Heart right ventricle (tissue), 16 donors: ENCODE measurements at regions of chr15 and their contacts with region 1.

Region 1: DNA sequence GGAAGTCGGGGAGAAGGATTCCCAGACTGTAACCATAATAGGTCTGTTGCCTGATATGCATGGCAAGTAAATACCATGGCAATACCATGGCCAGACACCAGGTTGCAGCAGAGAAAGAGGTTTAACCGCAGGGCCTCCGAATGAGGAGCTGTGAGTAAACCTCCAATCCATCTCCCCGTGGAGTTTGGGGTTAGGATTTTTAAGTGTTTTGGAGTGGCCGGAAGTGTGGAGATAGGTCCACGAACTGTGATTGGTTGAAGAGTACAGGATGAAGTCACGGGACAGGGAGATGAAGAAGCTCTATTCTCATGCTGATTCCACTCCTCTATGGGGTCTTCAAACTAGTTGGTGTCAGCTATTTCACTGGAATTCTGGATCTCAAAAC is 127.9 kb downstream of the ST8SIA2 start:
- DNase-seq: peak; percentile 31 to 86
- ATAC-seq: peak; percentile 87 to 97 (median 95)
- H3K4me3 ChIP-seq: no peak overlapping the region
- H3K27ac ChIP-seq: no peak overlapping the region
- H3K4me1 ChIP-seq: peaks cover 0 to 11% (median 3%) of the 10 kb centered on the region in 9 donors
- H3K27me3 ChIP-seq: no peaks in the 10 kb centered on the region
- CTCF ChIP-seq: peak; percentile 73 to 92 (median 80)

Region 2: GRCh38 chr15:92438471-92438870 is 83.1 kb before region 1 on chr15:
- intact Hi-C with region 1: no loop called
- DNase-seq: no peak
- ATAC-seq: no peak
- H3K4me3 ChIP-seq: no peak overlapping the region
- H3K27ac ChIP-seq: no peak overlapping the region
- H3K4me1 ChIP-seq: no peaks in the 10 kb centered on the region
- H3K27me3 ChIP-seq: peaks cover 0 to 11% (median 0%) of the 10 kb centered on the region in 7 donors
- CTCF ChIP-seq: no peak

Region 3: GRCh38 chr15:92553317-92553716 is 31.7 kb after region 1 on chr15:
- intact Hi-C with region 1: loop called in 1 of 10 experiments (anchors 1 kb)
- DNase-seq: no peak
- ATAC-seq: no peak
- H3K4me3 ChIP-seq: no peak overlapping the region
- H3K27ac ChIP-seq: no peak overlapping the region
- H3K4me1 ChIP-seq: no peaks in the 10 kb centered on the region
- H3K27me3 ChIP-seq: peaks cover 0 to 5% (median 0%) of the 10 kb centered on the region in 7 donors
- CTCF ChIP-seq: no peak

Region 4: DNA sequence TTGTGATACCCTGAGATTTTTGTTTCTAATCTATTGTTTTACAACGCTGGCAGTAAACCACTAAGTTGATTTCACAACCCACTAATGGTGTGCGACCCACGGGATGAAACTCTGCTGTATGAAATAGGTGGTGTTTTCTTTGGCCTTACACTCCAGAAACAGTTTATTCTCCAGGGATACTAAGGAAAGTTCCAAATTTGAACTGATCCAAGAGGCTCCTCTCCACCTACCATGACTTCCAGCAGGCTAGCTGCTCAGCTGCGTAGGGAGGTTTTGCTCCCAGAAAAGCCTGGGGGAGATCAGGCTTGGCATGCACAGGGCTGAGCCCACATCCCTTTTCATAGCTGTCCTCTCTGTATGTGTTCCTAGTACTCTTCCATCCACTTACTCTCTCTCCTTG is 62.5 kb after region 1 on chr15:
- intact Hi-C with region 1: no loop called
- DNase-seq: no peak
- ATAC-seq: peak in 3 of 8 donors; percentile 15 to 55 (median 54)
- H3K4me3 ChIP-seq: no peak overlapping the region
- H3K27ac ChIP-seq: no peak overlapping the region
- H3K4me1 ChIP-seq: peaks cover 0 to 5% (median 0%) of the 10 kb centered on the region in 9 donors
- H3K27me3 ChIP-seq: peaks cover 0 to 7% (median 0%) of the 10 kb centered on the region in 7 donors
- CTCF ChIP-seq: no peak

Region 5: GRCh38 chr15:92599394-92599970 is 77.9 kb after region 1 on chr15:
- intact Hi-C with region 1: loop called in 4 of 10 experiments (anchors 1 to 10 kb)
- DNase-seq: no peak
- ATAC-seq: no peak
- H3K4me3 ChIP-seq: no peak overlapping the region
- H3K27ac ChIP-seq: no peak overlapping the region
- H3K4me1 ChIP-seq: peaks cover 0 to 9% (median 0%) of the 10 kb centered on the region in 9 donors
- H3K27me3 ChIP-seq: no peaks in the 10 kb centered on the region
- CTCF ChIP-seq: no peak

Region 6: DNA sequence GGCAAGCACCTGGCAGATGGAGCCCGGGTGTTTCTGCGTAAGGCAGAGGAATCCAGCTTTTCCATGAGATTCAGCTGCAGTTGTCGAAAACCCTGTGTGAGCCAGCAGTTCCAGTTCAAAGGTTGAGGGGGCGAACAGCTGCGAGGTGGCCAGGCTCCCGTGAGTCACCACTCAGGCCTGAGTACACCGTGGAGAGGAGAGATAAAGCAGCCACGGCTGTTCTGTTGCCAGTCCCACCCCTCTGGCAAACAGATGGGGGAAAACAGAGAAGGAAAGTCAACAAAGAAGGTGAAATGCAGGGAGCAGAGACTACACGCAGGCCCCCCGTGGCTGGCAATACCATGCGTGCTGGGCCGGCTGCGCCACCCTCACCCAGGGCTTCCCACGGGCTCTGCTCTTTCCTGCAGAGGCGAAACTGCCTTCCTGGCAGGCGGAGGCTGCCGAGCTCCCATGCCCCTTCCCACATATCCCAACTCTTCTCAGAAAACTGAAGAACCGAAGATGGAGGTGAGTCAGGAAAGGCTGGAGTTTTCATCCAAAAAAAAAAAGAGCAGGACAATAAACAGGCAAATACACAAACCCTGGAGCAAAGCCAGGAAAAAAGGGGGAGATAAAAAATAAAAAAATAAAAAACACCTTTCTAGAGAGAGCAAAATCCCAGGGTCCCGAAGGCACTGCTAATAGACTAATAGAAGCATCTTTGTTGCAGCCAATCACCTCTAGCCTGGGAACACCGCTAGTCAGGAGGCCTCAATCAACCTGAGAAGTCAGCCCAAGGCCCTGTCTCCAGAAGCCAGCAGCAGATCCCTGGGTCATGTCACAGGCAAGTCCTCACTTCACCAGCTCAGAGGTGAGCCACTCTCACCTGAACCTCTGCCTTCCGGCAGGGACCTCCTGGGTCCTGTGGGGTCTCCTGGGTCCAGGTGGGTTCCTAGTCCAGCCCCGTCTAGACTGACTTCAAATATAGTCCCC is 96.2 kb after region 1 on chr15:
- intact Hi-C with region 1: loop called in 2 of 10 experiments (anchors 10 kb)
- DNase-seq: peak; percentile 59 to 66
- ATAC-seq: peak; percentile 62 to 96 (median 88)
- H3K4me3 ChIP-seq: no peak overlapping the region
- H3K27ac ChIP-seq: peak overlapping the region in 8 of 10 donors; percentile 30 to 65 (median 40)
- H3K4me1 ChIP-seq: peaks cover 8 to 39% (median 25%) of the 10 kb centered on the region in 9 donors
- H3K27me3 ChIP-seq: no peaks in the 10 kb centered on the region
- CTCF ChIP-seq: no peak

Region 7: GRCh38 chr15:92683232-92683834 is 161.7 kb after region 1 on chr15:
- intact Hi-C with region 1: loop called (anchors 1 to 5 kb)
- DNase-seq: peak; percentile 28 to 46
- ATAC-seq: peak in 6 of 8 donors; percentile 41 to 82 (median 62)
- H3K4me3 ChIP-seq: no peak overlapping the region
- H3K27ac ChIP-seq: peak overlapping the region in 4 of 10 donors; percentile 2 to 79 (median 18)
- H3K4me1 ChIP-seq: peaks cover 0 to 32% (median 0%) of the 10 kb centered on the region in 9 donors
- H3K27me3 ChIP-seq: no peaks in the 10 kb centered on the region
- CTCF ChIP-seq: peak; percentile 57 to 78 (median 69)

Region 8: GRCh38 chr15:92714477-92715401 is 193.1 kb after region 1 on chr15:
- intact Hi-C with region 1: loop called (anchors 1 to 5 kb)
- DNase-seq: peak; percentile 68 to 80
- ATAC-seq: peak; percentile 89 to 95 (median 92)
- H3K4me3 ChIP-seq: peak overlapping the region; percentile 39 to 79 (median 62)
- H3K27ac ChIP-seq: peak overlapping the region in 9 of 10 donors; percentile 19 to 76 (median 66)
- H3K4me1 ChIP-seq: peaks cover 0 to 12% (median 4%) of the 10 kb centered on the region in 9 donors
- H3K27me3 ChIP-seq: no peaks in the 10 kb centered on the region
- CTCF ChIP-seq: peak; percentile 86 to 98 (median 93)